Adrenal gland (tissue), 19 donors: ENCODE measurements at regions of chr3 and their contacts with region 1.

Region 1: DNA sequence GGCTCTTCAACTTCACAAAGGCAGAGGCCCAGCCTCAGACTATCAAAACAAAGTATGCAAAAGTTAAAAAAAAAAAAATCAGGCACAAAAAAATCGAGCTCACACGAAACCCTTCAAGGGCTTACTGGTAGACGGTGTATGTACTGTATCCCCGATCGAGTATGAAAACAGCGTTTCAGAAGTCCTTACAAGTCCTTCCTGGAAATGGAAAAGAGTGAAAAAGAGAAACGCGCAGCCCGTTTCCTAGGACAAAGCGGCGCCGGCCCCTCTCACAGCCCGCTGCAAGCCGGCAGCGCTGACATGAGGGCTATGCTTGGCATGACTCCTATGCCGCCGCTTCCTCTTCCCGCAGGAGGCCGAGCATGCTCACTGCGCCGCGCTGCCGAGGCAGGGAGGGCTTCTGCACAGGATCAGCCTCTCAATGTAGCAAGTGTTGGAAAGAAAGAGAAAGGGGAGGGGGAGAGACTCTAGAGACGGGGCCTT is at the start of gene VGLL4:
- DNase-seq: peak; percentile 87 to 94 (median 90)
- H3K4me3 ChIP-seq: peak within 1 kb of the TSS; percentile 24 to 84 (median 58)
- H3K27ac ChIP-seq: peak within 1 kb of the TSS; percentile 89 to 97 (median 94)
- H3K4me1 ChIP-seq: peaks cover 27 to 34% of the 10 kb centered on the region in 2 donors
- H3K27me3 ChIP-seq: no peaks in the 10 kb centered on the region
- CTCF ChIP-seq: peak in 3 of 6 experiments; percentile 26 to 33 (median 31)
- POLR2A ChIP-seq: peak; percentile 65 to 94
- total RNA-seq, gene VGLL4: 38.3 to 153 (median 106) TPM

Region 2: GRCh38 chr3:11570789-11571495 is 72.7 kb before region 1 on chr3:
- intact Hi-C with region 1: loop called in 1 of 2 experiments (anchors 10 kb)
- DNase-seq: peak in 5 of 7 donors; percentile 73 to 93 (median 89)
- H3K4me3 ChIP-seq: no peak overlapping the region
- H3K27ac ChIP-seq: peak overlapping the region; percentile 55 to 99 (median 78)
- H3K4me1 ChIP-seq: peaks cover 13 to 31% of the 10 kb centered on the region in 2 donors
- H3K27me3 ChIP-seq: no peaks in the 10 kb centered on the region
- CTCF ChIP-seq: no peak
- POLR2A ChIP-seq: peak in 1 of 2 donors; percentile 36